GM10248 (cell line): ENCODE measurements at regions of chr5 and their contacts with region 1.

Region 1: DNA sequence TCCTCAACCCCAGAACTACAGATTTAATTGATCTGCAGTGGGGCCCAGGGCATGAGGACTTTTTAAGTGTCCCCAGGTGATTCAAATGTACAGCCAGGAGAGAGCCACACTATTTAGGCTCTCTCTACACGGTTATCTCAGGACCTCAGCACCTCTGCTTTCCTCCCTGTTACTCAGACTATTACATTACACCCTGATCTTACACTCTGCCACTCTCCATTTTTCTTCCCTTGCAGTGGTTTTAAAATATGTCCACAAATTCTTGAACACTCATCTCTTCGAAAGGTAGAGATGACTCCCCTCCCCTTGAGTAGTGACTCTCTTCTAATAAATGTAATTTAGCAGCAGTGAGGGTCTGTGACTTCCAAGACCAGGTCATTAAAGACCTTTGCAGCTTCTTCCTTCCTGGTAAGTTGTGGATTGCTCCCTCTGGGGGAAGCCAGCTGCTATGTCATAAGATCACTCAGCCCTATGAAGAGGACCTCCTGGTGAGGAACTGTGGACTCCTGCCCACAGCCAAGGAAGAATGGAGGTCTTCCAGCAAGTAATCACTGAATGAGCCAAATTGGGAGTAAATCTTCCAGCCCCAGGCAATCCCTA is 87.5 kb upstream of the SSBP2 start:
- DNase-seq: no peak
- CTCF ChIP-seq: peak; percentile 57

Region 2: DNA sequence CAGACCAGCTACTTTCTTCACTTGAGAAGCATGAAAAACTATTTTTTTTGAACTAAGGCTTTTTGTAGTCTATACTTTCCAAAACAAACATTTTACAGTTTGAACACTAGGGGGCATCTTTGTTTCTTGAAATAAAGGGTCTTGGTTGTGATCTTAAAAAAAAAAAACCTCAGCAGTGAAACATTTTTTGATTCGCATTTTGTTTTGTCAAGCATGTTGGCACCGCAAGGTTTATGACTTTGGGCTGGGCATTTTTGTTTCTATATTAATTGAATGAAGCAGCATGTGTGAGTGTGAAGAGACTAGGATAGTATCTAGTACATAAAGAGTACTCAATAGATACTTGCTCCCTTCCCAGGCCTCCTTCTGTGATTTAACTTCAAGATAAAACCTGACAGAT is 412.8 kb before region 1 on chr5:
- CTCF ChIA-PET with region 1: interaction called, 18 read pairs
- POLR2A ChIA-PET with region 1: no interaction called
- DNase-seq: peak; percentile 23
- CTCF ChIP-seq: peak; percentile 40

Region 3: GRCh38 chr5:81506900-81507588 is 331.4 kb before region 1 on chr5:
- CTCF ChIA-PET with region 1: interaction called, 13 read pairs
- POLR2A ChIA-PET with region 1: no interaction called
- DNase-seq: peak; percentile 77
- CTCF ChIP-seq: peak; percentile 76

Region 4: DNA sequence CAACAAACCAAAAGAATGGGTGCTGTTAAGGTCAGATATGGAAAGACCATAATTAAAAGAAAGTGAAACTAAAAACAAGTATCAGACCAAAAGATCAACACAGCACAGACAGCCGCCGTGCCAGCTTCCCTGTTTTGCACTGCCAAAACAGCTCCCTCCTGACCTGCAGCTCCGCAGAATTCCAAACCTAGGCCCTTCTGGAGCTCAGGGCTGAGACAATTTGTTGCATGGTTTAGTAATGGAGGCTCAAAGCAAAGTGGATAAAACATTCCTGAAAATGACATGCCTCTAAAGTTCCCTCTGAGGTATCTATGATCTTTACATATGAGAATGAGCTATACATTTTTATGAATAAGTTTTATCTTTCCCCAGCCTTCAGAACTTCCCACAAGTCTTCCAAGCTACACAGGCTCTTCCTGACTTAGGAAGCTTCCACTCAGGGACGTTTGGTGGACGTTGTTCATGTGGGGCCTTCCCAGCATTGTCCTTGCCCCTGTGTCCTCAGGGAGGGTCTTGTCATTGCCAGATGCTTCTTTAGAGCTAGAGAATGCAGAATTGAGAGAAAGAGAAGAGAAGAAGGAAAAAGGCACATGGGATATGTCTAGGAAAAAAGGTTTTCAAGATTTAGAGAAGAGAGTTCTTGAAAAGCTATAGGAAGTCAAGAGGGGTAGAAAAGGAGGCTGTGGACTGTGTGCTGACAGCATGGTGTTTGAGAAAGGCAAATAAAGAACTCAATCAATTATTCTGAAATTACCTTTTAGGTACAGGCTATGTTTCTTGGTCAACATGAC is 59.1 kb before region 1 on chr5:
- CTCF ChIA-PET with region 1: interaction called, 10 read pairs
- POLR2A ChIA-PET with region 1: no interaction called
- DNase-seq: peak; percentile 34
- CTCF ChIP-seq: no peak

Region 5: GRCh38 chr5:81851481-81852178 is 13.2 kb after region 1 on chr5:
- CTCF ChIA-PET with region 1: interaction called, 24 read pairs
- POLR2A ChIA-PET with region 1: no interaction called
- DNase-seq: peak; percentile 90
- CTCF ChIP-seq: no peak

Region 6: GRCh38 chr5:81856948-81857928 is 18.8 kb after region 1 on chr5:
- CTCF ChIA-PET with region 1: interaction called, 24 read pairs
- POLR2A ChIA-PET with region 1: no interaction called
- DNase-seq: no peak
- CTCF ChIP-seq: peak; percentile 38

Region 7: DNA sequence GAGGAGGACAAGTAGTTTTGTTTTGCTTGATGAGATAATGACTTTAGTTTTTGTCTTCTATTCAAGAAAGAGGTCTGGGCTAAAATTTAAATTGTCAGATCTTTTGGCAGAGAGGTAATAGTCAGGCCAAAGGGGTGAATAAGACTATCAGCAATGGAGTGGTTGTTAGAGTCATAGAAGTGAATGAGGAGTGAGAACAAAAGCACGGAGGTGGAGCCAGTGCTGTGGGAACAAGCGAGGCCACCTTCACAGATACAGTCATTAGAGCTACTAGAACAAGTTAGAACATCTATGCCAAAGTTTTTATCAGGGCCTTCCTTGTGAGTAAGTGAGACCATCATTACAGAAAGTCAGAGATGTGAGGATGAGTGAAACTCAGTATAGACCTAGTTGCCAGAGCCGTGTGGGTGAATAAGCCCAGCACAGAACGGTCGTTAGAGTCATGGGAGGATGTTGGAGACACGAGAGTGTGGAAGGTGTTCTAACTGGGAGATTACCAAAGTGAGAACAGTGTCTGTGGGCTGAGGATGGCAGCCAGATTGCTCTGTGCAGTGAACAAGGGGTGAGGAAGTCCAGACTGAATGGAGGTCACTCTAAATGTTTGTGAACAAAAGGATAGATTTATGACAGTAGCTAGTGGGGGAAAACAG is 304.6 kb after region 1 on chr5:
- CTCF ChIA-PET with region 1: no interaction called
- POLR2A ChIA-PET with region 1: no interaction called
- DNase-seq: no peak
- CTCF ChIP-seq: no peak

Region 8: GRCh38 chr5:82197550-82197949 is 359.1 kb after region 1 on chr5:
- CTCF ChIA-PET with region 1: no interaction called
- POLR2A ChIA-PET with region 1: no interaction called
- DNase-seq: no peak
- CTCF ChIP-seq: no peak